Ovary (tissue), 10 donors: ENCODE measurements at regions of chr16 and their contacts with region 1.

Region 1: GRCh38 chr16:31754998-31755615 is 118.5 kb upstream of the ZNF267 start:
- DNase-seq: no peak
- H3K4me3 ChIP-seq: no peak overlapping the region
- H3K27ac ChIP-seq: no peak overlapping the region
- H3K4me1 ChIP-seq: no peaks in the 10 kb centered on the region
- H3K27me3 ChIP-seq: no peaks in the 10 kb centered on the region
- CTCF ChIP-seq: no peak
- EP300 ChIP-seq: no peak
- POLR2A ChIP-seq: no peak

Region 2: DNA sequence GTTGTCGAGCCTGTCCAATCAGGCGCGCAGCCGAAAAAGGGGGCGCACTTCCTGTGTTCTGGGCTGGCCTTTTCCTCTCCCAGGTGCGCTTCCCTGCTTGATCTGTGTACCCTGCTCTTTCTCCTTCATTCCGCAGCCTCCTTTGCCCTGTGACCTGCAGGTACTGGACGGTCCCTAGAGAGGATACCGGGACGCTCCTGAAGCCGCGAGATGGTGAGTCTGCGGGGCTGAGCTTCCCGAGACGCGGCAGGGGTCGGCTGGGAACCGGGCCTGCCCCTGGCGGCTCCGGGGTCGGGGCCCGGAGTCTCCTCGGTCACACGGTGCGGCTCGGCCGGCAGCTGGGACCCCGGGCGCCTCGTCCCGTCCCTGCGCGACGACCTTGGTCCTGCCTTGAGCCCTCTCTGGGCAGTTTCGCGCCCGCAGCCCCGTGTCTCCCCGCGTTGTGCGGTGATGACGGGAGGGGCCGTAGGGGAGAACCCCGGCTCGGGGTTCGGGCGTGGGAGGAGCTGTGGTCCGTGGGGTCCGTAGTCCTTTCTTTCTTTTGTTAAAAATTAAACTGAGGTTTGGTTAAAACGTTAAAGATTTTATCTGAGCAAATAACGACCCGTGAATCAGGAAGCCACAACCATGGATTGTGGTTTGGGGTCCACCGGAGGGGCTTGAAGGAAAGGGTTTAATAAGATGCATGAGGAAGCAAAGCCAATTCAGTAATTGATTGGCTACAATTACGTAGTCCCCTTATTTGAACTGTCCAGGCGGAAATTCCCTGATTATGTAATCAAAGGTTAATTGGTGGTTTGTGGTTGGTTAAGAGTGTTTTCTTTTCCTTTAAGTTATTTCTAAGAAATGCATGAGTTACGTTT is 54.4 kb before region 1 on chr16:
- intact Hi-C with region 1: no loop called
- DNase-seq: peak; percentile 79 to 88 (median 84)
- H3K4me3 ChIP-seq: peak overlapping the region; percentile 78
- H3K27ac ChIP-seq: peak overlapping the region in 1 of 2 donors; percentile 49
- H3K4me1 ChIP-seq: no peaks in the 10 kb centered on the region
- H3K27me3 ChIP-seq: no peaks in the 10 kb centered on the region
- CTCF ChIP-seq: no peak
- EP300 ChIP-seq: no peak
- POLR2A ChIP-seq: no peak

Region 3: DNA sequence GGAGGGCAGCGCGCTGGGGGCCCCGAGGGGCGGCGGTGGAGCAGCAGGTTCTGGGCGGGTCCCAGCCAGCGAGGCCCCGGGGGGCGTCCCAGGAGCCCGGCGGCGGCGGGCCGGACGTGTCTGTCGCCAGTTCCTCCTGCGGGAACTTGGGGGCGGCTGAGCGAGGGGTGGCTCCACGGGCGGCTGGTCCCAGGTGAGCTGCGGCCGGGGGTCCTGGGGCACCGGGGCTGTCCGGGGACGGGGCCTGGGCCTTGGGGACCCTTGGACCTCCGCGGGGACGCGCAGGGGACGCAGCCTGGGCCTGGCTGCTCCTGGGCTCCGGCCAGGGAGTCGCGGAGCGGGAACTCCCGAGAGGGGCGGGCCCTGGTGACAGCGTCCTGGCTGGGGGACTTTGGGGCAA is 64.3 kb after region 1 on chr16:
- intact Hi-C with region 1: loop called in 1 of 4 experiments (anchors 10 kb)
- DNase-seq: no peak
- H3K4me3 ChIP-seq: no peak overlapping the region
- H3K27ac ChIP-seq: no peak overlapping the region
- H3K4me1 ChIP-seq: no peaks in the 10 kb centered on the region
- H3K27me3 ChIP-seq: no peaks in the 10 kb centered on the region
- CTCF ChIP-seq: no peak
- EP300 ChIP-seq: no peak
- POLR2A ChIP-seq: no peak